PC-3 (cell line): ENCODE measurements at regions of chr5 and their contacts with region 1.

Region 1: DNA sequence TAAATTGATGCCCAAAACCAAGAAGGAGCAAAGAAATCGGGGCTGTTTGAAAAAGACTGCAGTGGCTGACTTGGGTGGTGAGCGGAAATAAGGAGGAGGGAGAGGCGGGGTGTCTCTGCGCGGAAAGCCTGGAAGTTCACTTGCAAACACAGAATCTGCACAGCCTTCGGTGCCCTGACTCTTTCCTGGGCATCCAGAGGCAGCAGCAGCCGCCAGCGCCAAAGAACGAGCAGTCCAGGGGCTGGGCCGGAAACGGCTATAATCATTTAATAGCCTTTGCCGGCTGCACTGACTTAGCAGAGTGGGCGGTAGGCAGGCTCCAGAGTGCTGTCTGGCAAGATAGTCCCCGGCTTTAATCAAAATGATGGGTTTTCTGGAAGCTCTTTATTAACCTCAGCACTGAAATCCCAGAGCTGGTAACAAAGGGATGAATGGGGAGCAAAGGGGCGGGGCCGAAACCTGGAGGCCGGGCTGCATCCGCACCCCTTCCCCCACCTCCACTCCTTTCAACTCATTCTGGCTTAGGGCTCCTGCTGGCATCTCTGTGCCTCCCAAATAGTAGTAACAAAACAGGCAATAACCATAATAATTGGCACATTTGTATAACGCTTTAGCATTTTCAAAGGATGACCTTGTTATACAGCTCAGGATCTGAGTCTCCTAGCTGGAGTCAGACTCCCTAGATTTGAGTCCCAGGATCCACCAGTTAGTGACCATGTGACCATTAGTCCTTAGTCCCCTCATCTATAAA is 35.8 kb downstream of the PCDHAC2 start:
- DNase-seq: peak; percentile 48
- ATAC-seq: peak; percentile 47
- H3K4me3 ChIP-seq: peak overlapping the region; percentile 66
- H3K27ac ChIP-seq: peak overlapping the region; percentile 90
- H3K4me1 ChIP-seq: peaks cover 39% of the 10 kb centered on the region
- H3K27me3 ChIP-seq: no peaks in the 10 kb centered on the region
- CTCF ChIP-seq: no peak

Region 2: DNA sequence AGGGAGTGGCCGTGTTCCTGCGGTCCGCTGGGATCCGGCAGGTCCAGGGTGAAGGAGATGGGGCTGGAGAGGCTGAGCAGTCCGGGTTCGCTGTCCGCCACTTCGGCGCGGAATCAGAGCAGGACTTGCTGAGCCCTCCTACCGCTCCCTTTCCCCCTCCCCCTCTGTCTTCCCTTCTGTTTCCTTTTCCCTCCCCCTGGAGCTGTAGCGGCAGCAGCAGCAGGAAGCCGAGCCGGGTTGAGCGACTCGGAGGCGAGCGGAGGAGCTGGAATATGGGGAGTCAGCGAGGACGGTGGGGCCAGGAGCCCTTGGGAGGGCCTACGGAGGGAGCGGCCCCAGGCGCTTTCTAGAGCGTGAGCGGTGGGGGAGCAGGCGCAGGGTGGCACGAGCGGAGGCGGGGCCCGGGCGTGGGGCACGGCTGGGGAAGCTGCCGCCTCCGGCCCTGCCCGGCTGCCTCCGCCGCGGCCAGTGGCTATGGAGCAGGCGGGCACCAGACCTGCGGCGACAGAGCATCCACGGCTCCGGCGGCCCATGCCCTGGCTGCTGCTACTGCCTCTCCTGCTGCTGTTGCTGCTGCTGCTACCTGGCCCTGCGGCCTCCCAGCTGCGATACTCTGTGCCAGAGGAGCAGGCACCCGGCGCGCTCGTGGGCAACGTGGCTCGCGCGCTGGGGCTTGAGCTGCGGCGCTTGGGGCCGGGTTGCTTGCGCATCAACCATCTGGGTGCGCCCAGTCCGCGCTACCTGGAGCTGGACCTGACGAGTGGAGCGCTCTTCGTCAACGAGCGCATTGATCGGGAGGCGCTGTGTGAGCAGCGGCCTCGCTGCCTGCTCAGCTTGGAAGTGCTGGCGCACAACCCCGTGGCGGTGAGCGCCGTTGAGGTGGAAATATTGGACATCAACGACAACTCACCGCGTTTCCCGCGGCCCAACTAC is 35.5 kb before region 1 on chr5 and contains the start of gene PCDHAC2:
- CTCF ChIA-PET with region 1: no interaction called
- POLR2A ChIA-PET with region 1: no interaction called
- intact Hi-C with region 1: loop called (anchors 5 kb)
- DNase-seq: peak; percentile 60
- ATAC-seq: peak; percentile 79
- H3K4me3 ChIP-seq: peak within 1 kb of the TSS; percentile 90
- H3K27ac ChIP-seq: no peak within 1 kb of the TSS
- H3K4me1 ChIP-seq: peaks cover 21% of the 10 kb centered on the region
- H3K27me3 ChIP-seq: no peaks in the 10 kb centered on the region
- CTCF ChIP-seq: no peak
- total RNA-seq, gene PCDHAC2: 4.2 and 8.2 TPM in 2 replicates